ENCODE measurements at regions of chr2 and their contacts with region 1.

Region 1: DNA sequence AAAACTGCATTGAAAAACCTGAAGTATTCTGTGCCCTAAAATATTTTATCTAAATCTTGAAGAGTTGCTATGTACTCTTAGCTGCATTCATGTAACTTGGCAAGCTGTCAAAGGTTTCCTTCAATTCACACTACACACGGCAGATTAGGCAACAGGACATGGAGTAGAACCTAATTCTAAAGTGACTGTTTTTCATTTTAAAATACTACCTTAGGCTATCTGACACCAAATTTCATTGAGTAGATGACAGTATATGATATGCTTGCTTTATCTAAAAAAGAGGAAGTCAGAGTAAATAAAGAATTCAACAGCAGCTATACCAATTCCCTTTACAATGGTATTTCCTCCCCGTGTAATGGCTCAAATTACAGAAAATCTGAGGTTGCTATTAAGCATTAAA is 45.4 kb downstream of the EXOC6B start:
- DNase-seq: peak; percentile 56
- ATAC-seq: no peak
- H3K4me3 ChIP-seq: no peak overlapping the region
- H3K27ac ChIP-seq: no peak overlapping the region
- H3K4me1 ChIP-seq: peaks cover 2% of the 10 kb centered on the region; the same call in 1 of the 2 replicates
- H3K27me3 ChIP-seq: no peaks in the 10 kb centered on the region
- CTCF ChIP-seq: no peak
- POLR2A ChIP-seq: no peak
- RAD21 ChIP-seq: no peak

Region 2: DNA sequence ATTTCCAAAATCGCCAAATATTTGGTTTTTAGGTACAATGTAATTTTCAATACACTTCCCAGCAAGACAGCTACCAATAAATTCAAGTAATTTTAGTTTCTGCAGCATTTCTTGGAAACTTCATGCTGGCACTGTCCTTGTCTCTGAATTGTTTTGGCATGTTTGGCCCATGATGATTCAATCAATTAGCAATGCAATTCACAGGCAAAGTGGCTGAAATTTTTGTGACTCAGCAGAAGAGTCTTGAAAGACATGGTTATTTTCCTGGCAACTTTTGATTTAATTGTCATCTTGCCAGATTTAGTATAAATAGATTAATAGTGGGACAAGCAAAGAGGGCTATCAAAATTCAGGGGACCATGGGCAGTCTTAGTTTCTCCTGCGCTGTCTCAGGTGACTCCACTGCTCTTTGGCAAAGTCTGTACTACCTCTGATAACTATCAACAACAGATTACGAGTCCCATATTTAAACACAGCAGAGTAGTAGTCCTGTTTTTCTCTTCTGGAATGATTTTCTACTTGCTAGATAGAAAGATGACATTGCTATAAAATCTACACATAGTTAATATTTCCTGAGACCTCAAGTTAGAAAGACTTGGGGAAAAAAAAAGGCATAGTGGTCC is 543.9 kb before region 1 on chr2:
- CTCF ChIA-PET with region 1: no interaction called
- POLR2A ChIA-PET with region 1: no interaction called
- dilution Hi-C with region 1: no loop called
- in situ Hi-C with region 1: no loop called
- intact Hi-C with region 1: no loop called
- DNase-seq: peak; percentile 75
- ATAC-seq: peak; percentile 66
- H3K4me3 ChIP-seq: no peak overlapping the region
- H3K27ac ChIP-seq: no peak overlapping the region; the same call in 1 of the 2 replicates
- H3K4me1 ChIP-seq: peaks cover 2% of the 10 kb centered on the region
- H3K27me3 ChIP-seq: no peaks in the 10 kb centered on the region
- CTCF ChIP-seq: no peak
- POLR2A ChIP-seq: no peak
- RAD21 ChIP-seq: no peak

Region 3: DNA sequence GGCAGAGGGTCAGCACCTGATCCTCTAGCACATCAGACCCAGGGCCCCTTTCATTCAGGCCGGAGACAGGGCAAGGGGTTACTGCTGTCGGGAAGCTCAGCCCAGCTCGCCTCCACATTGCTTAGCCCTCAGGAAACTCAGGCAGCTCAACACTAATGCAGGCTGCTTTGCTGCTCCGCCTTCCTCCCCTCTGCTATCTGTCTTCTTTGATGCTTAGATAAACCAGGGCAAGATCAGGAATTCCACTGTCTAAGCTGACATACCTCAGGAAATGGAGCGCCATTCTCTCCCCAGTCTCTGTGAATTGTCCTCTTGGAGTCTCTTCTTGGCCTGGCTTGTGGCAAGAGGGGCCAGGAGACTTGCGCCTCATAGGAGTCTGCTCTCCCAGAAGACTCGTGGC is 70.8 kb after region 1 on chr2:
- CTCF ChIA-PET with region 1: interaction called, 3 read pairs
- POLR2A ChIA-PET with region 1: no interaction called
- dilution Hi-C with region 1: no loop called
- in situ Hi-C with region 1: loop called (anchors 5 kb)
- intact Hi-C with region 1: no loop called
- DNase-seq: no peak
- ATAC-seq: no peak
- H3K4me3 ChIP-seq: no peak overlapping the region
- H3K27ac ChIP-seq: no peak overlapping the region
- H3K4me1 ChIP-seq: no peaks in the 10 kb centered on the region
- H3K27me3 ChIP-seq: peaks cover 58% of the 10 kb centered on the region
- CTCF ChIP-seq: no peak
- POLR2A ChIP-seq: no peak
- RAD21 ChIP-seq: no peak

Region 4: DNA sequence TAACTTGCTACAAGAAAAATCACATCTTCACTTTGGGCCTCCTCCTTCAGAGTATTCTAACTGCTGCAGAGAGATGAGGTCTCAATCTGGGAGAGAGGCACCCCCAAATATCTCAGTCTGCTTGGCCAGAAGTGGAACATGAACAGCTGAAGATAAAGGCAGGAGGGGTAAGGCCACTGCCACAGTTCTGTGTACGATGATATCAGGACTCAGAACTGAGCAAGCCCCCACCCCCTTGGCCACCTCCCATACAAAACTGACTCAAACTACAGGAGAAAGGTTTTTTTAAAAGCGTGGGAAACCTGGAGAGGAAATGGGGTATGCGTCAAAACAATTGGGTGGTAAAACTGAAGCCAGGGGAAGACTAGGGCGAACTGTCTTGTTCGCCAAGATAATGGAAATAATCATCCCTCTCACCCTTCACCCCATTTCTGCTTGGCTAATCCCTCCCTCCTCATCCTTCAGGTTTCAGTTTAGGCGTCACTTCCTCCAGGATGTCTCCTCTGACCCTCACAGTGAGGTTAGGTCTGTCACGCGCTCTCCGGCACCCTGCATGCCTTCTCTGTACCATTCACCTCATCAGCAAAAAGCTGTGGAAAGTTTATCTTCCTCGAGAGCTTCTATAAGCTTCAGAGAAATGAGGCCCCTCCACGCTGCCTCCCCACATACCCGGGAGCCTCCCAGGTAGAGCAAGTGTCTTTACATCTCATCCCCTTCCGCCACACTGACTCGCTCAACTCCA is 226.7 kb after region 1 on chr2:
- CTCF ChIA-PET with region 1: no interaction called
- POLR2A ChIA-PET with region 1: no interaction called
- dilution Hi-C with region 1: no loop called
- in situ Hi-C with region 1: no loop called
- intact Hi-C with region 1: no loop called
- DNase-seq: peak; percentile 33
- ATAC-seq: no peak
- H3K4me3 ChIP-seq: no peak overlapping the region
- H3K27ac ChIP-seq: no peak overlapping the region
- H3K4me1 ChIP-seq: no peaks in the 10 kb centered on the region
- H3K27me3 ChIP-seq: no peaks in the 10 kb centered on the region
- CTCF ChIP-seq: no peak
- POLR2A ChIP-seq: no peak
- RAD21 ChIP-seq: no peak

Measured in IMR-90 (cell line).